Heart right ventricle (tissue), 16 donors: ENCODE measurements at regions of chr2 and their contacts with region 1.

Region 1: GRCh38 chr2:240714747-240715725 is 23.4 kb downstream of the AQP12A start:
- DNase-seq: no peak
- ATAC-seq: no peak
- H3K4me3 ChIP-seq: no peak overlapping the region
- H3K27ac ChIP-seq: no peak overlapping the region
- H3K4me1 ChIP-seq: no peaks in the 10 kb centered on the region
- H3K27me3 ChIP-seq: peaks cover 0 to 64% (median 0%) of the 10 kb centered on the region in 7 donors
- CTCF ChIP-seq: no peak

Region 2: GRCh38 chr2:240499309-240500301 is 215.4 kb before region 1 on chr2:
- intact Hi-C with region 1: loop called in 1 of 10 experiments (anchors 10 kb)
- DNase-seq: no peak
- ATAC-seq: peak in 3 of 8 donors; percentile 11 to 32 (median 23)
- H3K4me3 ChIP-seq: no peak overlapping the region
- H3K27ac ChIP-seq: no peak overlapping the region
- H3K4me1 ChIP-seq: no peaks in the 10 kb centered on the region
- H3K27me3 ChIP-seq: no peaks in the 10 kb centered on the region
- CTCF ChIP-seq: no peak